Dorsolateral prefrontal cortex (tissue), 120 donors: ENCODE measurements at regions of chr10 and their contacts with region 1.

Region 1: GRCh38 chr10:70146489-70147258 is at the start of gene TYSND1:
- DNase-seq: peak; percentile 93 to 99 (median 97)
- H3K4me3 ChIP-seq: peak within 1 kb of the TSS; percentile 58 to 100 (median 83)
- H3K27ac ChIP-seq: peak within 1 kb of the TSS; percentile 57 to 98 (median 94)
- H3K27me3 ChIP-seq: no peaks in the 10 kb centered on the region
- CTCF ChIP-seq: peak; percentile 18 to 89 (median 70)
- total RNA-seq, gene TYSND1: 8.9 to 21.6 (median 15.1) TPM

Region 2: DNA sequence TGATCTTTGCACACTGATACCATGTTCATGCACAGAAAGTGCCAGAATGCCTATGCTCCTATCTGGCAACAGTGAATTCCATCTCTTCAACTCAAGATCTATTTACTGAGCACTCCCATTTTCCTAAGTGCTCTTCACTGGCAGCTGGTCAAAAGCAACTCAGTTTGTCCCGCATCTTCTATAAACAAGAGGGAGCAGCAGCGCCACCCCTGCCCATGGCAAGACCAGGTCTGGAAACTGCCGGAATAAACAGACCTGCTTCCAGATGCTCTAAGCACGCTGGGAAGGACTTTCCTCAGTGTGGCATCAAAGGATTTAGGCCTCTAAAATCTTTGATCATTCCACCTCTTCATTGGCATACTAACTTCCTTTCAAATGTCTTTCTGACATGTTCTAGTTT is 198.4 kb before region 1 on chr10:
- intact Hi-C with region 1: no loop called
- DNase-seq: no peak
- H3K4me3 ChIP-seq: no peak overlapping the region
- H3K27ac ChIP-seq: no peak overlapping the region
- H3K27me3 ChIP-seq: no peaks in the 10 kb centered on the region
- CTCF ChIP-seq: no peak

Region 3: GRCh38 chr10:70169649-70170364 is 23.1 kb after region 1 on chr10:
- intact Hi-C with region 1: loop called in 1 of 2 experiments (anchors 1 kb)
- DNase-seq: peak in 2 of 10 donors; percentile 40 to 50
- H3K4me3 ChIP-seq: peak overlapping the region; percentile 68 to 98 (median 93)
- H3K27ac ChIP-seq: peak overlapping the region in 58 of 59 donors; percentile 51 to 96 (median 87)
- H3K27me3 ChIP-seq: no peaks in the 10 kb centered on the region
- CTCF ChIP-seq: no peak

Region 4: GRCh38 chr10:70233109-70233938 is 86.7 kb after region 1 on chr10 and contains the start of gene PPA1:
- intact Hi-C with region 1: loop called in 1 of 2 experiments (anchors 10 kb)
- DNase-seq: peak; percentile 98 to 100 (median 99)
- H3K4me3 ChIP-seq: peak within 1 kb of the TSS; percentile 64 to 100 (median 93)
- H3K27ac ChIP-seq: peak within 1 kb of the TSS; percentile 42 to 91 (median 81)
- H3K27me3 ChIP-seq: no peaks in the 10 kb centered on the region
- CTCF ChIP-seq: peak in 38 of 56 donors; percentile 3 to 66 (median 36)
- total RNA-seq, gene PPA1: 63.3 to 219 (median 163) TPM

Region 5: DNA sequence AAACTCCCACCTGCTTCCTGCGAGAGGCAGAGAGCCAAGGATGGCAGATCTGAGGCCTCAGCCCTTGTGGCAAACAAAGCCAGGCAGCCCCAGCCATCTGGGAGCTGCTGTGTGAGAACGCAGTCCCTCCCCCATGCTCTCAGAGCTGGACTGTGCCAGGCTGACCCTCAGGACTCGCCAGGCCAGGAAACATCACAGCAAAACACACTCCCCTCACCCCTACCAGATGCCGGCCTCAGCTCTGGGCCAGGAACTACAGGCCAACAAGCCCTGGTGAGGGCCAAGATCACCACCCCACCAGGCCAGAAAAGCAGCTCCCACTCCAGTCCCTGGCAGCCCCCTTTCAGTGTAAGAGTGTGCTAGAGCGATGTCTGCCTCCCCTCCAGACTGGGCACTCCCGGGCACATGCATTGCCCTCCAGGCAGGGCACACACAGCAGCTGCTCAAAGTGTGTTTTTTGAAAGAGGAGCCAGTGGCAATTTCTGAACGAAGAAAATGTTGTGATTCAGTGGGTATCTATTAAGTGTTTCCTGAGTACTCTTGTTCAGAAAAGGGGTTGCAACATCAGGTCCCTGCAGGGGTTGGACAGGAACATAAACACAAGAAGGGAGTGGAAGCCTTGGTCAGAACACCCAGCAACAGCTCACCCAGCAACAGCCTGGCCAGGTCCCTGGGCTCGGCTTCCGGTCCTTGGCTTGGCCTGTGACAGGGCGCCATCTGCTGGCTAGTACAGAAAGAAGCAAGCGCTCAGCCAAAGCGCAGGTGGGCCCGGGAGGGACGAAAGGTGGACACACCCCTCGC is 217.5 kb after region 1 on chr10:
- intact Hi-C with region 1: loop called in 1 of 2 experiments (anchors 5 kb)
- DNase-seq: peak; percentile 81 to 93 (median 90)
- H3K4me3 ChIP-seq: peak overlapping the region in 29 of 59 donors; percentile 0 to 44 (median 23)
- H3K27ac ChIP-seq: peak overlapping the region in 58 of 59 donors; percentile 48 to 93 (median 81)
- H3K27me3 ChIP-seq: no peaks in the 10 kb centered on the region
- CTCF ChIP-seq: peak; percentile 79 to 99 (median 96)

Region 6: GRCh38 chr10:71293446-71294084 is 1146.9 kb after region 1 on chr10:
- intact Hi-C with region 1: no loop called
- DNase-seq: peak in 5 of 10 donors; percentile 33 to 71 (median 54)
- H3K4me3 ChIP-seq: no peak overlapping the region
- H3K27ac ChIP-seq: peak overlapping the region in 18 of 59 donors; percentile 9 to 73 (median 46)
- H3K27me3 ChIP-seq: no peaks in the 10 kb centered on the region
- CTCF ChIP-seq: no peak